ENCODE measurements at regions of chr6 and their contacts with region 1.

Region 1: GRCh38 chr6:135851442-135852271 is at the start of gene PDE7B:
- DNase-seq: peak; percentile 89
- H3K4me3 ChIP-seq: peak within 1 kb of the TSS; percentile 10 to 58 (median 14)
- H3K27ac ChIP-seq: peak within 1 kb of the TSS; percentile 2
- H3K4me1 ChIP-seq: peaks cover 17% of the 10 kb centered on the region
- H3K27me3 ChIP-seq: peaks cover 0 to 8% of the 10 kb centered on the region in 2 experiments
- CTCF ChIP-seq: no peak
- POLR2A ChIP-seq: no peak
- total RNA-seq, gene PDE7B: 21.3 and 25.1 TPM in 2 replicates

Region 2: GRCh38 chr6:135675862-135676261 is 175.8 kb before region 1 on chr6:
- CTCF ChIA-PET with region 1: no interaction called
- POLR2A ChIA-PET with region 1: no interaction called
- dilution Hi-C with region 1: no loop called
- intact Hi-C with region 1: loop called (anchors 5 kb)
- DNase-seq: peak; percentile 63
- H3K4me3 ChIP-seq: no peak overlapping the region
- H3K27ac ChIP-seq: no peak overlapping the region
- H3K4me1 ChIP-seq: no peaks in the 10 kb centered on the region
- H3K27me3 ChIP-seq: no peaks in the 10 kb centered on the region
- CTCF ChIP-seq: peak in 1 of 2 donors; percentile 8
- POLR2A ChIP-seq: no peak

Region 3: GRCh38 chr6:135819665-135820064 is 32.0 kb before region 1 on chr6:
- CTCF ChIA-PET with region 1: no interaction called
- POLR2A ChIA-PET with region 1: no interaction called
- dilution Hi-C with region 1: no loop called
- intact Hi-C with region 1: no loop called
- DNase-seq: no peak
- H3K4me3 ChIP-seq: no peak overlapping the region
- H3K27ac ChIP-seq: no peak overlapping the region
- H3K4me1 ChIP-seq: no peaks in the 10 kb centered on the region
- H3K27me3 ChIP-seq: peaks cover 0 to 2% of the 10 kb centered on the region in 2 experiments
- CTCF ChIP-seq: no peak
- POLR2A ChIP-seq: no peak

Region 4: GRCh38 chr6:135830452-135830881 is 21.2 kb before region 1 on chr6:
- CTCF ChIA-PET with region 1: interaction called, 10 read pairs
- POLR2A ChIA-PET with region 1: interaction called, 7 read pairs
- dilution Hi-C with region 1: no loop called
- intact Hi-C with region 1: no loop called
- DNase-seq: no peak
- H3K4me3 ChIP-seq: no peak overlapping the region
- H3K27ac ChIP-seq: no peak overlapping the region
- H3K4me1 ChIP-seq: peaks cover 3% of the 10 kb centered on the region
- H3K27me3 ChIP-seq: peaks cover 19 to 20% of the 10 kb centered on the region in 2 experiments
- CTCF ChIP-seq: no peak
- POLR2A ChIP-seq: no peak

Region 5: GRCh38 chr6:136059308-136059707 is 207.7 kb after region 1 on chr6:
- CTCF ChIA-PET with region 1: no interaction called
- POLR2A ChIA-PET with region 1: no interaction called
- dilution Hi-C with region 1: no loop called
- intact Hi-C with region 1: no loop called
- DNase-seq: no peak
- H3K4me3 ChIP-seq: no peak overlapping the region
- H3K27ac ChIP-seq: no peak overlapping the region
- H3K4me1 ChIP-seq: peaks cover 29% of the 10 kb centered on the region
- H3K27me3 ChIP-seq: no peaks in the 10 kb centered on the region
- CTCF ChIP-seq: no peak
- POLR2A ChIP-seq: no peak